ENCODE measurements at regions of chr2 and their contacts with region 1.

Region 1: GRCh38 chr2:192314800-192315481 is 120.2 kb upstream of the TMEFF2 start:
- DNase-seq: no peak
- H3K4me3 ChIP-seq: no peak overlapping the region
- H3K27ac ChIP-seq: no peak overlapping the region
- H3K4me1 ChIP-seq: no peaks in the 10 kb centered on the region
- H3K27me3 ChIP-seq: no peaks in the 10 kb centered on the region
- CTCF ChIP-seq: no peak
- POLR2A ChIP-seq: no peak

Region 2: GRCh38 chr2:191664823-191665677 is 649.9 kb before region 1 on chr2:
- intact Hi-C with region 1: loop called (anchors 5 kb)
- DNase-seq: no peak
- H3K4me3 ChIP-seq: no peak overlapping the region
- H3K27ac ChIP-seq: no peak overlapping the region
- H3K4me1 ChIP-seq: no peaks in the 10 kb centered on the region
- H3K27me3 ChIP-seq: no peaks in the 10 kb centered on the region
- CTCF ChIP-seq: no peak
- POLR2A ChIP-seq: no peak

Measured in vagina (tissue), 2 donors.